ENCODE measurements at regions of chr10 and their contacts with region 1.

Region 1: GRCh38 chr10:71835671-71836595 is 15.1 kb downstream of the PSAP start:
- DNase-seq: no peak
- ATAC-seq: no peak
- H3K4me3 ChIP-seq: no peak overlapping the region
- H3K27ac ChIP-seq: no peak overlapping the region
- H3K4me1 ChIP-seq: peaks cover 23 to 40% of the 10 kb centered on the region in 2 experiments; a peak in 4 of 5 replicates
- H3K27me3 ChIP-seq: no peaks in the 10 kb centered on the region
- CTCF ChIP-seq: no peak
- EP300 ChIP-seq: no peak
- POLR2A ChIP-seq: no peak
- RAD21 ChIP-seq: no peak

Region 2: GRCh38 chr10:71561003-71561574 is 274.8 kb before region 1 on chr10:
- CTCF ChIA-PET with region 1: no interaction called
- POLR2A ChIA-PET with region 1: no interaction called
- in situ Hi-C with region 1: no loop called
- intact Hi-C with region 1: no loop called
- DNase-seq: no peak
- ATAC-seq: 0 out of 3 replicates have a peak, but pooled peaks have one; percentile 26
- H3K4me3 ChIP-seq: no peak overlapping the region
- H3K27ac ChIP-seq: no peak overlapping the region
- H3K4me1 ChIP-seq: no peaks in the 10 kb centered on the region; a peak in 1 of 5 replicates
- H3K27me3 ChIP-seq: peaks cover 26 to 35% of the 10 kb centered on the region in 2 experiments
- CTCF ChIP-seq: no peak
- EP300 ChIP-seq: no peak
- POLR2A ChIP-seq: no peak
- RAD21 ChIP-seq: no peak

Region 3: GRCh38 chr10:71822448-71822763 is 13.5 kb before region 1 on chr10:
- CTCF ChIA-PET with region 1: no interaction called
- POLR2A ChIA-PET with region 1: interaction called, 15 read pairs
- in situ Hi-C with region 1: no loop called
- intact Hi-C with region 1: no loop called
- DNase-seq: no peak
- ATAC-seq: no peak
- H3K4me3 ChIP-seq: no peak overlapping the region
- H3K27ac ChIP-seq: no peak overlapping the region
- H3K4me1 ChIP-seq: peaks cover 0 to 5% of the 10 kb centered on the region in 2 experiments; a peak in 1 of 5 replicates
- H3K27me3 ChIP-seq: no peaks in the 10 kb centered on the region
- CTCF ChIP-seq: no peak
- EP300 ChIP-seq: no peak
- POLR2A ChIP-seq: no peak
- RAD21 ChIP-seq: no peak

Region 4: GRCh38 chr10:71888623-71889387 is 52.9 kb after region 1 on chr10:
- CTCF ChIA-PET with region 1: interaction called, 3 read pairs
- POLR2A ChIA-PET with region 1: interaction called, 6 read pairs
- in situ Hi-C with region 1: loop called (anchors 5 kb)
- intact Hi-C with region 1: no loop called
- DNase-seq: peak; percentile 76 to 88 (median 84)
- ATAC-seq: peak; percentile 91
- H3K4me3 ChIP-seq: peak overlapping the region; percentile 47
- H3K27ac ChIP-seq: peak overlapping the region; percentile 76
- H3K4me1 ChIP-seq: peaks cover 25 to 35% of the 10 kb centered on the region in 2 experiments
- H3K27me3 ChIP-seq: no peaks in the 10 kb centered on the region
- CTCF ChIP-seq: peak; percentile 13 to 66 (median 36); a peak in 4 of 6 replicates
- EP300 ChIP-seq: 0 out of 2 replicates have a peak, but pooled peaks have one; percentile 22
- POLR2A ChIP-seq: peak; percentile 74
- RAD21 ChIP-seq: peak; percentile 33 to 38